Activated CD4-positive, alpha-beta memory T cell treated with anti-CD3 and anti-CD28 coated beads for 36 hours (primary cell): ENCODE measurements at regions of chr1 and their contacts with region 1.

Region 1: DNA sequence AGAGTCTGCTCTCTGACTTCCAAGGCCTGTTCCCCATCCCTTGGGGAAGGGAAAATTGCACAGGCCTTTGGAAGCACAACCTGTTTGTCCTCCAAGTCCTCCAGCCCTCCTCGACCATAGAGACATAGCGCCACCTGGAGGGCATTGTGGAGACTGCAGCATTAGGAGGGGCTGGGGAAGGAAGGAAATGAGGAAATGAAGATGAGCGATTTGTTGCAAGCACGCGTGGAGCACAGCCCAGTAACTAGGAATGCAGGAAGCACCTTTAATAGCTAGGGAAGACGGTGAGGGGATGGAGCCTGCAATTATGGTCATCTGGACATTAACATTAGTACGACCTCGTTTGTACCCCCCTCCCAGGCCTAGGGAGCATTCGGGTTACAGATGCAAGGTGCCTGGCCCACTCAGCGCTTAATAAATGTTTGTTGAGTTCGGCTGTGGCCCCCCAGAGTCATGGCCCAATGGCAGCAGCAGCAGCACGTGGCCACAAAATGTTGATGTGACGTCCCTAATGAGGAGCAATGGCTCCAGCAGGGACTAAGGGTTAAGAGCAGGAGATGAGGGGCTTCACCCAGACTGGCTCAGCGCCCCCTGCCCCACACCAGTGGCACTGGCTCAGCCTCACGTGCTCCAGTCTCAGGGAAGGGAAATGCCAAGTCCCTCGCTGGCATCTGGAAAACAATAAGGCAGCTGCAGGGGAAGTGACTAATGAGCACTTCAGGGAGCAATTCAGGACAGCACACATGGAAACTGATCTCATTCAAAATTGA is 8.0 kb upstream of the CAMK2N1 start:
- DNase-seq: peak; percentile 87
- H3K4me3 Mint-ChIP-seq: no peak overlapping the region
- H3K27ac Mint-ChIP-seq: no peak overlapping the region
- H3K4me1 Mint-ChIP-seq: peaks cover 29% of the 10 kb centered on the region
- H3K27me3 Mint-ChIP-seq: no peaks in the 10 kb centered on the region

Region 2: DNA sequence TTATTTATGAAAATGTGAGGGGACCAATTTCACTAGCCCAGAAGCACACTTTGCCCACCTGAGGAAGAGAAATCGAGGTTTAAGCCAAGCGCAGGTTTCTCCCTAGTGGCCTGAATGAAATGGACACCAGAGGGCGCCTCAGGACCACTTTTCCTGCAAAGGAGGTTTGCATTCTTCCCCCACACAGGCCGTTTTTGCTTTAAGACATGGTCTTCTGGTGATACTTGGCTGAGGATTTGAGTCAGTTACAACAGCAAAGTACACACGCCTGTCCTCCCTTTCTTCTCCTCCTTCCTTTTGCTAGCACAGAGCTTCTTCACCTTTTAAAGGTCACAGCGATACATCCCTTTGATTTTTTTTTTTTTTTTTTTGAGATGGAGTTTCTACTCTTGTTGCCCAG is 576.0 kb before region 1 on chr1:
- CTCF ChIA-PET with region 1: interaction called, 3 read pairs
- POLR2A ChIA-PET with region 1: no interaction called
- intact Hi-C with region 1: loop called (anchors 10 kb)
- DNase-seq: peak; percentile 86
- H3K4me3 Mint-ChIP-seq: no peak overlapping the region
- H3K27ac Mint-ChIP-seq: no peak overlapping the region
- H3K4me1 Mint-ChIP-seq: peaks cover 2% of the 10 kb centered on the region
- H3K27me3 Mint-ChIP-seq: no peaks in the 10 kb centered on the region

Region 3: GRCh38 chr1:20233394-20233793 is 260.6 kb before region 1 on chr1:
- CTCF ChIA-PET with region 1: interaction called, 13 read pairs
- POLR2A ChIA-PET with region 1: no interaction called
- intact Hi-C with region 1: no loop called
- DNase-seq: no peak
- H3K4me3 Mint-ChIP-seq: no peak overlapping the region
- H3K27ac Mint-ChIP-seq: no peak overlapping the region
- H3K4me1 Mint-ChIP-seq: no peaks in the 10 kb centered on the region
- H3K27me3 Mint-ChIP-seq: peaks cover 41% of the 10 kb centered on the region

Region 4: DNA sequence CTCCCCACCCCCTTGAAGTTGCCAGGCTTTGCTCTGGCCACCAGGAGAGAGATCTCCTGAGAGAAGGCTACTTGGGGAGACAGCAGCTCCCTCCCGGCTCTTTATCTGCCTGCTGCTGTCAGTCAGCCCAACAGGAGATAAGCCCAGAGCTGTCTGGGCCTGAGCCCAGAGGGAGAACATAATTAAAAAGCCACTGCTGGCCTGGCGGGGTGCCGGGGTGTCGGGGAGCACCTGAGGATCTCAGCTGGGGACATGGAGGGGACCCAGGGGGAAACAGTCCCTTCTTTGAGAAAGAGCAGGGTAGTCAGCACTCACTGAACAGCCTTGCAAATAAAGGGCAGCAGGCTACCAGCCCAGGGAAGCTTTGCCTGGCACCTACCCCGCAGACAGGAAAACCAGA is 185.5 kb before region 1 on chr1:
- CTCF ChIA-PET with region 1: no interaction called
- POLR2A ChIA-PET with region 1: no interaction called
- intact Hi-C with region 1: no loop called
- DNase-seq: no peak
- H3K4me3 Mint-ChIP-seq: no peak overlapping the region
- H3K27ac Mint-ChIP-seq: no peak overlapping the region
- H3K4me1 Mint-ChIP-seq: no peaks in the 10 kb centered on the region
- H3K27me3 Mint-ChIP-seq: no peaks in the 10 kb centered on the region

Region 5: DNA sequence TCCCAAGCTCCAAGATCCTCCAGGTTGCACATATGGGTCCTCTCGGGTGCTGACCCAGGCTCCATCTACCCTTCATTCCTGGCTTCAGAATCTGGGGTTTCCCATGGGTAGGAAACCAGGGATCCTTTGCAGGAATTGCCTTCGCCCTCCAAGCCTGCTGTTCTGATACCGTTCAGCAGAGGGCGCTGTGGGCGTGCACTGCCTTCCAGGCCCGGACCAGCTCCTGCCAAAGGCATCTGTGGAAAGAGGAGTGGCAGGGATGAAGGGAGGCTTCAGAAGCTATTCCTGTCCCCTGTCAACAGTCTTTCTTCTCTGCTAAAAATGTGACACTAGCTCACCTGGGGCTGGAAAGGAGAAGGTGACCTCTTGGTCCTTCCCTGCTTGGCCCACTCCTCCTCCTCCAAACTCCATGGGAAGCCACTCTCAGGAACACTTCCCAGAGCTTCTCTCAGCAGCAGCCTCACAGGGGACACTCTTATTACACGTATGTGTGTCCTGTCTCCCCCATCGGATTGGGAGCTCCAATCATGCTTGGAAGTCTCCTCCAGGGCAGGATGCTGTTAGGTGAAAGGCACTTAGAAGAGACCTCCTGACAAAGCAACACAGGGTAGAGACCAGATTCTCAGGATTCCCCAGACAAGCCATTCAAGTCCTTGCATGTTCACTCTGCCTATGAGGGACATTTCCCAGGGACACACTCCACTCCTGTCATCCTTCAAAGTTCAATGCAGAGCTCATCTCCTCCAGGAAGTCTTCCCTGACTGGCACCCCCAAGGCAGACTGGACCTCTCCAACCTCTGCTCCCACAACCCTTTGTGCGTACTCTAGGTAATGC is 132.0 kb before region 1 on chr1:
- CTCF ChIA-PET with region 1: interaction called, 29 read pairs
- POLR2A ChIA-PET with region 1: no interaction called
- intact Hi-C with region 1: loop called (anchors 1 kb)
- DNase-seq: peak; percentile 56
- H3K4me3 Mint-ChIP-seq: no peak overlapping the region
- H3K27ac Mint-ChIP-seq: no peak overlapping the region
- H3K4me1 Mint-ChIP-seq: peaks cover 12% of the 10 kb centered on the region
- H3K27me3 Mint-ChIP-seq: peaks cover 63% of the 10 kb centered on the region

Region 6: DNA sequence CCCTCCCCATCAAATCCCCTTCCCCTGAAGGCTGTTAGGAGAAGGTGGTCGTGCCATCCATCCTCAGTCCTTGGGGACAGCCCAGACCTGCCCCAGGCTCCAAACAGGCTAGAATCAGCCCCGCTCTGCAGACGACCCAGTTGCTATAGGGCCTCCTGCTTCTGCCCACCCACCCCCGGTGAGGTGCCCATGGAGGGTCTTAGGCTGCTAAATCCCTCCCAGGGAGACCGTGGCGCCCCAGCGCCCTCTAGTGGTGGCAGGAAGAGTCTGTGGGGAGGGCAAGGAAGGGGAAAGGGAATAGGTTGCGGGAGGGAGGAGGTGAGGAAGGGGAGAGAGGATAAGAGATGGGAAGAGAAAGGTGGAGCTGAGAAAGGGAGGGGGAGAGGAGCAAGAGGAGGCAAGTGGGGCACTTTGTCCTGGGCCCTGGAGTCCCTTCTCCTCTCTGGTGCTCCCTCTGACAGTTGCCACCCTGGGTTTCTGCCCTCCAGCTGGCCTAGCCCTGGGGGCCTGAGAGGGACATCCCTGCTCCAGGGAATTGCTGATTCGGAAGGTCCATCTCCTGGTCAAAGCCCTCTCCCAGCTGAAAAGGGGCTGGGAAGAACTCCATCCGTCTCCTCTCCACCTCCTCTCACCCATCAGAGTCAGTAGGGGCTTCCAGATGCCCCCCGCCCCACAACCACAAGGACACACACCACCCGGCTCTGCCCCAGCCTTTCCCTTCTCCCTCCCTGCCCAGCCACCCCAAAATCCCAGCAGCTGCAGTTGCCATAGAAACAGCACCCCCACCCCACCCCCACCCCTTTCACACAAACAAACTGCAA is 63.5 kb before region 1 on chr1:
- CTCF ChIA-PET with region 1: interaction called, 10 read pairs
- POLR2A ChIA-PET with region 1: no interaction called
- intact Hi-C with region 1: loop called (anchors 2 kb)
- DNase-seq: peak; percentile 60
- H3K4me3 Mint-ChIP-seq: no peak overlapping the region
- H3K27ac Mint-ChIP-seq: no peak overlapping the region
- H3K4me1 Mint-ChIP-seq: peaks cover 8% of the 10 kb centered on the region
- H3K27me3 Mint-ChIP-seq: peaks cover 25% of the 10 kb centered on the region